GM12878 (cell line): ENCODE measurements at regions of chr6 and their contacts with region 1.

Region 1: GRCh38 chr6:147861696-147862095 is 353.2 kb downstream of the SAMD5 start:
- DNase-seq: no peak
- ATAC-seq: no peak
- H3K4me3 ChIP-seq: no peak overlapping the region
- H3K27ac ChIP-seq: no peak overlapping the region
- H3K4me1 ChIP-seq: no peaks in the 10 kb centered on the region
- H3K27me3 ChIP-seq: no peaks in the 10 kb centered on the region; a peak in 1 of 4 replicates
- CTCF ChIP-seq: no peak
- EP300 ChIP-seq: no peak
- POLR2A ChIP-seq: no peak
- RAD21 ChIP-seq: no peak

Region 2: DNA sequence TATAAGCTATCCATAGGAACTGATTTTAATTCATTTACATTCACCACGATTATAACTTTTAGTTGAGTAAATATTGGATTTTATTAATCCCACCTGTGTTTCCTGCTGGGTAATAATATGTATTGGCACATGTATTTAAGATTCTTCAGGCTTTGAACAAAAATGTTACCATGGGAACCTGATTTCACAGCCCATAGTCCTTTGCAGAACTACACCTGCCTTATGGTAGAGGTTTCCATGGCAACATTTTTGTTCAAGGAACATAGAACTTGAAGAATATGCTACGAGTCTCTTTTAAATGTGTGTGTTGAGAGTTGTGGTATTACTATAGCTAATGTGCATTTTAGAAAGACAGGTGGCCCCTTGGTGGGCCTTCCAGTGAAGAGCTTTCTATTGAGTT is 35.8 kb before region 1 on chr6:
- CTCF ChIA-PET with region 1: no interaction called
- POLR2A ChIA-PET with region 1: no interaction called
- RAD21 ChIA-PET with region 1: no interaction called
- SMC1A ChIA-PET with region 1: no interaction called
- in situ Hi-C with region 1: no loop called
- intact Hi-C with region 1: loop called (anchors 2 kb)
- DNase-seq: no peak
- ATAC-seq: no peak
- H3K4me3 ChIP-seq: no peak overlapping the region
- H3K27ac ChIP-seq: no peak overlapping the region
- H3K4me1 ChIP-seq: no peaks in the 10 kb centered on the region
- H3K27me3 ChIP-seq: no peaks in the 10 kb centered on the region
- CTCF ChIP-seq: no peak
- EP300 ChIP-seq: no peak
- POLR2A ChIP-seq: no peak
- RAD21 ChIP-seq: no peak